ENCODE measurements at regions of chr2 and their contacts with region 1.

Region 1: DNA sequence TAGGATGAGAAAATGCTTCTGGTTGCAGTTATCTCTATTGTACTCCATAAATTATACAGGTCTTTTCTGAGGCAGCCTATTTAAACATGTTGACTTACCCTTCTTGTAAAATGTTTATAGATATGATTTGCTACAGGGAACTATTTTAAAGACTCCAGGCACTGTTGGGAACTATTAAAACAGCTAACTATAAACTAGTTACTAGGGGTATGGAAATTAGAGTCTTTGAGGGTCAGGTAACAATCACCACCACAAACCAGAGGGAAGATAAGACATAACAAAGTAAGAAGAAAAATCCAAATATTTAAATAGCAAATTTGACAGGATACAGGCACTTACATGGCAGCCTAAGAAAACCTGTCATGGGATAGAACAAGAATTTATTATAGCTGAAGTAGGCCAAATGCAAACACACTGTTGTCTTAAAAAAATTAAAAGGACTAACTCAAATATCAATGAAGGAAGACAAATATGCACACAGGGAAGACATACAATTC is 251.0 kb upstream of the CWC22 start:
- DNase-seq: peak; percentile 62
- ATAC-seq: peak; percentile 83
- H3K4me3 ChIP-seq: no peak overlapping the region
- H3K27ac ChIP-seq: peak overlapping the region; percentile 84
- H3K4me1 ChIP-seq: peaks cover 28% of the 10 kb centered on the region
- H3K27me3 ChIP-seq: no peaks in the 10 kb centered on the region
- CTCF ChIP-seq: no peak

Region 2: GRCh38 chr2:180291060-180291459 is 33.0 kb after region 1 on chr2:
- CTCF ChIA-PET with region 1: no interaction called
- POLR2A ChIA-PET with region 1: no interaction called
- intact Hi-C with region 1: loop called (anchors 1 kb)
- DNase-seq: peak; percentile 89
- ATAC-seq: peak; percentile 78
- H3K4me3 ChIP-seq: peak overlapping the region; percentile 56
- H3K27ac ChIP-seq: peak overlapping the region; percentile 97
- H3K4me1 ChIP-seq: peaks cover 38% of the 10 kb centered on the region
- H3K27me3 ChIP-seq: no peaks in the 10 kb centered on the region
- CTCF ChIP-seq: no peak

Region 3: DNA sequence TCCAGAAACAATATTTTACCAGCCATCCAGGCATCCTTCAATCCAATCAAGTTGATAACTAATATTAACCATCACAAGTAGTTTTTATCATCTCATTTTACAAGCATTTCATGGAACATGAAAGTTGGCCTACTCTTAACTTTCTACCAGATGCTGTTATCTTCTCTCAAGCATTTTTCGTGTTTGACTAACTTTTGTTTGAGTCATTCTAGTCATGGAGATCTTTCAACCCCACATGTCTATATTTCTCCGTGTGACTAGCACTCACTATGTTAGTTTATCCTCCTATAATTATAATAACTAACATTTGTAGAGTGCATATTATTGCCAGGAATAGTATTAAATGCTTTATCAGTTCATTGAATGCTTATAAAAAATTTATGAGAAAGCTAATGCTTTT is 56.0 kb after region 1 on chr2:
- CTCF ChIA-PET with region 1: no interaction called
- POLR2A ChIA-PET with region 1: no interaction called
- intact Hi-C with region 1: loop called (anchors 1 kb)
- DNase-seq: no peak
- ATAC-seq: peak; percentile 27; the same call in 1 of the 2 replicates
- H3K4me3 ChIP-seq: no peak overlapping the region
- H3K27ac ChIP-seq: no peak overlapping the region
- H3K4me1 ChIP-seq: no peaks in the 10 kb centered on the region
- H3K27me3 ChIP-seq: no peaks in the 10 kb centered on the region
- CTCF ChIP-seq: no peak

Region 4: DNA sequence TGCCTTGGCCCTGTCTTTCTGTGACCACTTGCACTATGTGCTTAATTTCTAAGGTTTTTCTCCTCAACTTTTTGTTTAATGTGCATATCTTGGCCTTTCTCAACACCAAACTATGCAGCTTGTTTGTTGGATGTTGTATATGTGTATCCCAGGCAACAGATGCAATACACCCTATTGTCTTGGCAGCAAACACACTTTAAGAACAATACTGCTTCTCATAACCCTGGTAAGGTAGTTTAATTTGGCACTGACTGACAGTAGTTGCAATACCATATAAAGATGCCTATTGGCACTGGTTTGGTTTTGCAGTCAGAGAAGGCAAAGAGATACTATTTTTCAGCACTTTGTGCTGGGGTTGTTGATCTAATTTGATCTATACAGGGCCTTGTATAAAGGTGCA is 109.7 kb after region 1 on chr2:
- CTCF ChIA-PET with region 1: no interaction called
- POLR2A ChIA-PET with region 1: no interaction called
- intact Hi-C with region 1: loop called (anchors 1 kb)
- DNase-seq: peak; percentile 68
- ATAC-seq: peak; percentile 93
- H3K4me3 ChIP-seq: no peak overlapping the region
- H3K27ac ChIP-seq: peak overlapping the region; percentile 71
- H3K4me1 ChIP-seq: peaks cover 25% of the 10 kb centered on the region
- H3K27me3 ChIP-seq: no peaks in the 10 kb centered on the region
- CTCF ChIP-seq: no peak

Region 5: DNA sequence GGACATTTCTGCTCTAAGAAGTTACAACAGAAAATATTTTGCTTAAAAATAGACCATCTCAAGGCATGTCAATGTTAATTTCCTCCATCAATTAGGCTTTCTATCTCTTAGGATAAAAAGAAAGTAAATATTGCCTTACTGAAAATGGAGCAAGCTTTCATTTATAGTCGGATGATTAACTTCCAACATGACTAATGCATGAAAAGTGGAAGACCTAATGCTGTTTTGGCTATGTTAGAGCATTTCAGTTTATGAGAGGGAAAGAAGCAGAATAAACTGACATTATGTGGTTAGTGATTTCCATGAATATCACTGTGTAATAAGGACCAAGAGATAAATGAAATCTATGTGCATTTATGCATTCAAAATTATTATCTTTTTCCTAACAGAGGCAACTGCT is 247.1 kb after region 1 on chr2:
- CTCF ChIA-PET with region 1: no interaction called
- POLR2A ChIA-PET with region 1: no interaction called
- intact Hi-C with region 1: loop called (anchors 5 kb)
- DNase-seq: peak; percentile 66
- ATAC-seq: peak; percentile 61
- H3K4me3 ChIP-seq: no peak overlapping the region
- H3K27ac ChIP-seq: 0 out of 2 replicates have a peak overlapping the region, but pooled peaks have one; percentile 2
- H3K4me1 ChIP-seq: peaks cover 19% of the 10 kb centered on the region
- H3K27me3 ChIP-seq: no peaks in the 10 kb centered on the region
- CTCF ChIP-seq: no peak

Region 6: DNA sequence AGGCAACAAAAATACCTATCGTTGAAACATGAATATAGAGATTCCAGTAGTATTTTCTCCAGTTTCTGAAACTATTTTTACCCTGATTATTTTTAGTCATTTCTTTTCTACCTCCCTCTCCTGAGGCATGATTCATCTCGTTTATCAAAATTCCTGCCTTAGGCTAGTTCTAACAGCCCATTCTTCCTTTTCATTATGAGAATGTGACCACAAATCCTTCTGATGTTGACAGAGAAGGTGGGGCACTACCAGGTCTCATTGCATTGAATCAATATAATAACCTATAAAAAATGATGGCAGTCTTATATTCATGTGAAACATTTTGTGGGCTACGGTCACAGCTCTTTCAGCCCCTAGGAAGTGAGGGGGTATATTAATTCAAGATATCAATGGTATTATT is 315.9 kb after region 1 on chr2:
- CTCF ChIA-PET with region 1: no interaction called
- POLR2A ChIA-PET with region 1: no interaction called
- intact Hi-C with region 1: loop called (anchors 5 kb)
- DNase-seq: peak; percentile 97
- ATAC-seq: peak; percentile 89
- H3K4me3 ChIP-seq: no peak overlapping the region
- H3K27ac ChIP-seq: peak overlapping the region; percentile 73
- H3K4me1 ChIP-seq: peaks cover 48% of the 10 kb centered on the region
- H3K27me3 ChIP-seq: no peaks in the 10 kb centered on the region
- CTCF ChIP-seq: no peak

Region 7: DNA sequence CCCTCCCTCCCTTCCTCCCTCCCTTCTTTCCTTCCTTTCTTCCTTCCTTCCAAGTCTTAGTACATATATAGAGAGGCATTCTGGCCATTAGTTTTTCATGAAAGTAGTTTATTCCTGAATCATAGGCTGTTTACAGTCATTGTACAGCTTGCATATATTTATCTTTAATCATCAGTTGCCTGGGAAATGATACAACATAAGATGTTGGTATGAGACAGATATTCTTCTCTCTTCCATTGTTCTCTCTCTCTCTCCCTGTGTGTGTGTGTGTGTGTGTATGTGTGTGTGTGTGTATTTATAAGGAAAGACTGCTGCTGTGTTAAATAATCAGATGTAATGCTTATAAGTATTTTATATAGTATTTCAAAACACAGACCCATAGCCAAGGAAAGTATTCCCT is 432.5 kb after region 1 on chr2:
- CTCF ChIA-PET with region 1: no interaction called
- POLR2A ChIA-PET with region 1: no interaction called
- intact Hi-C with region 1: loop called (anchors 5 kb)
- DNase-seq: peak; percentile 76
- ATAC-seq: peak; percentile 45
- H3K4me3 ChIP-seq: no peak overlapping the region
- H3K27ac ChIP-seq: peak overlapping the region; percentile 31
- H3K4me1 ChIP-seq: peaks cover 38% of the 10 kb centered on the region
- H3K27me3 ChIP-seq: no peaks in the 10 kb centered on the region
- CTCF ChIP-seq: no peak